CD8-positive, alpha-beta T cell (primary cell): ENCODE measurements at regions of chr6 and their contacts with region 1.

Region 1: GRCh38 chr6:116570856-116571682 is at the start of gene RWDD1:
- DNase-seq: peak; percentile 94 to 99 (median 98)
- ATAC-seq: peak; percentile 95
- H3K4me3 ChIP-seq: peak within 1 kb of the TSS; percentile 75 to 93
- H3K4me3 Mint-ChIP-seq: peak within 1 kb of the TSS; percentile 99
- H3K27ac ChIP-seq: peak within 1 kb of the TSS; percentile 92 to 99
- H3K27ac Mint-ChIP-seq: peak within 1 kb of the TSS; percentile 99
- H3K4me1 ChIP-seq: peaks cover 32% of the 10 kb centered on the region
- H3K4me1 Mint-ChIP-seq: peaks cover 52% of the 10 kb centered on the region
- H3K27me3 ChIP-seq: no peaks in the 10 kb centered on the region
- H3K27me3 Mint-ChIP-seq: no peaks in the 10 kb centered on the region
- CTCF ChIP-seq: no peak
- total RNA-seq, gene RWDD1: 65.1 to 68.7 TPM

Region 2: DNA sequence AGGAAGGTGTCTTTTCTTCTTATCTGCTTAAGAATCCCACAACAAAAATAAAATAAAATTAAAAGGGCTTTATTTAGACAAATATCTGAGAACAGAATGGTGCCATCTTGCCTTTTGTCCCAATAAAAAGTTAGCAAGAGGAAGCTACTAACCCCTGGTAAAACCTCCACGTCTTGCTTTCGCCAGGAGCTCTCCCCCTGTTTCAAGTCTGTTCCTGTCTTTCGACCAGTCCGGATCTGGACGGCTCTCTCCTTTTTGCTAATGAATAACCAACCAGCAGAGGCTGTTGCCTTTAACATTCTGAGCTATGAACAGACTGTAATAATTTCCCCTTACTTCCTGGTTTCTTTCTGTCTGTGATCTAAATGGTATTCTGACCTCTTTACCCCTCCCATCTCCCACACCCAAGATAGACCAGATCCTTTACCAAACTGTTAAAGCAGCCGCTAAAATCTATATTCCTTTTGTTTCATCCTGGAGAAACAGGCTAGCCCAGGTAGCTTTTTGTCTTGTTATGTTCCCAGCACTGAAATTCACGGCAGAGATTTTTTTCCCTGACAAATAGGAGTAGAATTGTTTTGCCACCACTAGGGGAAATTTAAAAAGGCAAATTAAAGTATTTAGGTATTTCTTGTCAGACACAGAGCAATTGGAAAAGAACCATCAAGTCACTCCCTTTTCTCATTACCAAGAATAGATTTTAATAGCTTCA is 510.3 kb before region 1 on chr6 and contains the start of gene FRK:
- CTCF ChIA-PET with region 1: no interaction called
- POLR2A ChIA-PET with region 1: no interaction called
- intact Hi-C with region 1: no loop called
- DNase-seq: no peak
- ATAC-seq: no peak
- H3K4me3 ChIP-seq: no peak within 1 kb of the TSS
- H3K4me3 Mint-ChIP-seq: no peak within 1 kb of the TSS
- H3K27ac ChIP-seq: no peak within 1 kb of the TSS
- H3K27ac Mint-ChIP-seq: no peak within 1 kb of the TSS
- H3K4me1 ChIP-seq: no peaks in the 10 kb centered on the region
- H3K4me1 Mint-ChIP-seq: no peaks in the 10 kb centered on the region
- H3K27me3 ChIP-seq: peaks cover 0 to 3% of the 10 kb centered on the region in 2 experiments
- H3K27me3 Mint-ChIP-seq: peaks cover 9% of the 10 kb centered on the region
- CTCF ChIP-seq: no peak
- total RNA-seq, gene FRK: 0.03 TPM in 1 of 2 experiments, not detected in the other

Region 3: DNA sequence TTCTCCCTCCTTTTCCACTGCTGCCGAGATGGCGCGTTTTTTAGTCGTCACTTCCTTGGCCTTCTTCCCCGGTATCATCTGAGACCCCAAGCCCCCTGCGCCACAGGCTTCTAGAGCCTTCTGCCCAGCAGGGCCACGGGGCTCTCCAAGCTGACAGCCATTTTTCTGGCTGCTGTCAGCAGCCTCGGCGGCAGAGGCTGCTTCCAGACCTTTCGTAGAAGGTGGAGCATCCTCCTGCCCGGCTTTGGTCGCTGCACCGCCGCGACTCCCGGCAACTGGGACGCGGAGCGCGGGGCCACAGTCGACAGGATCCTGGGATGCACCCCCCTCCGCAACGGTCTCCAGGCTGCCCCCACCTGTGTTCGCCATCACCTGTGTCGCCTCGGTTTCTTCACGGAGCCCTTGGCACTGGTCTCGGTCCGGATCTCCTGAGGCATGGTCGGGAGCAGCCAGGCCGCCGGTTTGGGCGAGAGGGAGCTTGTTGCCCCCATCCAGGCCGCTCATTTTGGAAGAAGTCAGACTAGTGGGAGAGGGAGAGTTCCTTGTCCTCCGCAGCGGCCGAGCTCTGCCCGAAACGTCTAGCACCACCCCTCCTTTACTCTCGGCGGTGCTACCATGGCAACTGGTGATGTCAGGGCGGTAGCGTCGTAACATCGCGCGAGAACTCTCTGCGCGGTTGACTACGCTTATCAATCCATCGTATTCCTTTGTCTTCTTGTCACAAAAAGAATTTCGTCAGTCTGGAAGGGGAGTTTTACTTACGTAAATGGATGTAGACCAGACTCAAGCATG is 317.4 kb before region 1 on chr6 and contains the start of gene TSPYL4:
- CTCF ChIA-PET with region 1: no interaction called
- POLR2A ChIA-PET with region 1: interaction called, 6 read pairs
- intact Hi-C with region 1: loop called in 1 of 2 experiments (anchors 1 kb)
- DNase-seq: peak; percentile 83 to 98 (median 91)
- ATAC-seq: peak; percentile 94
- H3K4me3 ChIP-seq: peak within 1 kb of the TSS; percentile 89 to 91
- H3K4me3 Mint-ChIP-seq: no peak within 1 kb of the TSS
- H3K27ac ChIP-seq: peak within 1 kb of the TSS; percentile 95 to 98
- H3K27ac Mint-ChIP-seq: no peak within 1 kb of the TSS
- H3K4me1 ChIP-seq: peaks cover 37% of the 10 kb centered on the region
- H3K4me1 Mint-ChIP-seq: peaks cover 26% of the 10 kb centered on the region
- H3K27me3 ChIP-seq: no peaks in the 10 kb centered on the region
- H3K27me3 Mint-ChIP-seq: no peaks in the 10 kb centered on the region
- CTCF ChIP-seq: no peak
- total RNA-seq, gene TSPYL4: 51.0 to 51.6 TPM

Region 4: DNA sequence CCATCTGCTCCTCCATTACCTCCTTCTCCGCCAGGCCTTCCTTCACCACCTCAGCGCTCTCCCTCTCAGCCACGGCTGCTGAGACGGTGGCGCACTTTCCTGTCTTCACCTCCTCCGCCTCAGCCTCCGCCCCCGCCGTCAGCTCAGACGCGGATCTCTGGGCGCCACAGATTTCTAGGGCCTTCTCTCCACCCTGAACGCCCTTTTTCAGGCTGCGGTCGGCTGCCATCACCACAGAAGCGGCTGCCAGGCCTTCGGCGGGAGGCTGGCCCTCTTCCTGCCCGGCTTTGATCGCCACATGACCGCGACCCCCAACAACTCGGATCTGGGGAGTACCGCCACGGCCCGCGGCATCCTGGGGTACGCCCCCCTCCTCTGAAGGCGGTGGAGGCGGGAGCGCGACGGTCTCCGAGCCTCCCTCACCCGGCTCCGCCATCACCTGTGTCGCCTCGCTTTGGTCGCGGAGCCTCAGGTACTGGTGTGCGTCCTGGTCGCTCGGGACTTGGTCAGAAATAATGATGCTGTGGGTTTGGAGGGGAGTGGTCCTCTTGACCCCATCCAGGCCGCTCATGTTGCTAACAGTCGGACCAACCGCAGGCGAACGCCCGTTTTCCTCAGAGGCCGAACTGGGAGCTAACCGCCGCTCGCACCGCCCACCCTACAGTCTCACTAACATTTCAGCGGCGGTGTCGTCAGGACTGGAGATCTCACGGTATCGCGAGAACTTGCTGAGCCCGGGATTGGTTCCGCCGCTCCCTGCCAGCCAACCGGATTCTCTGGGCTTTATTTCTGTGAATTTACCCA is 291.6 kb before region 1 on chr6 and contains the start of gene TSPYL1:
- CTCF ChIA-PET with region 1: interaction called, 3 read pairs
- POLR2A ChIA-PET with region 1: interaction called, 52 read pairs
- intact Hi-C with region 1: loop called (anchors 1 kb)
- DNase-seq: peak; percentile 88 to 99 (median 94)
- ATAC-seq: peak; percentile 82
- H3K4me3 ChIP-seq: peak within 1 kb of the TSS; percentile 79 to 98
- H3K4me3 Mint-ChIP-seq: peak within 1 kb of the TSS; percentile 97
- H3K27ac ChIP-seq: peak within 1 kb of the TSS; percentile 97 to 100
- H3K27ac Mint-ChIP-seq: peak within 1 kb of the TSS; percentile 99
- H3K4me1 ChIP-seq: peaks cover 55% of the 10 kb centered on the region
- H3K4me1 Mint-ChIP-seq: peaks cover 62% of the 10 kb centered on the region
- H3K27me3 ChIP-seq: no peaks in the 10 kb centered on the region
- H3K27me3 Mint-ChIP-seq: no peaks in the 10 kb centered on the region
- CTCF ChIP-seq: no peak
- total RNA-seq, gene TSPYL1: 247 to 248 TPM

Region 5: GRCh38 chr6:116328528-116328903 is 242.6 kb before region 1 on chr6:
- CTCF ChIA-PET with region 1: no interaction called
- POLR2A ChIA-PET with region 1: no interaction called
- intact Hi-C with region 1: no loop called
- DNase-seq: no peak
- ATAC-seq: no peak
- H3K4me3 ChIP-seq: no peak overlapping the region
- H3K4me3 Mint-ChIP-seq: no peak overlapping the region
- H3K27ac ChIP-seq: no peak overlapping the region
- H3K27ac Mint-ChIP-seq: no peak overlapping the region
- H3K4me1 ChIP-seq: no peaks in the 10 kb centered on the region
- H3K4me1 Mint-ChIP-seq: no peaks in the 10 kb centered on the region
- H3K27me3 ChIP-seq: no peaks in the 10 kb centered on the region
- H3K27me3 Mint-ChIP-seq: no peaks in the 10 kb centered on the region
- CTCF ChIP-seq: no peak

Region 6: GRCh38 chr6:116413357-116413756 is 157.7 kb before region 1 on chr6:
- CTCF ChIA-PET with region 1: no interaction called
- POLR2A ChIA-PET with region 1: interaction called, 11 read pairs
- intact Hi-C with region 1: no loop called
- DNase-seq: no peak
- ATAC-seq: no peak
- H3K4me3 ChIP-seq: no peak overlapping the region
- H3K4me3 Mint-ChIP-seq: no peak overlapping the region
- H3K27ac ChIP-seq: no peak overlapping the region
- H3K27ac Mint-ChIP-seq: no peak overlapping the region
- H3K4me1 ChIP-seq: no peaks in the 10 kb centered on the region
- H3K4me1 Mint-ChIP-seq: no peaks in the 10 kb centered on the region
- H3K27me3 ChIP-seq: no peaks in the 10 kb centered on the region
- H3K27me3 Mint-ChIP-seq: no peaks in the 10 kb centered on the region
- CTCF ChIP-seq: no peak

Region 7: GRCh38 chr6:116615937-116616736 is 45.1 kb after region 1 on chr6 and contains the start of gene RSPH4A:
- CTCF ChIA-PET with region 1: no interaction called
- POLR2A ChIA-PET with region 1: interaction called, 5 read pairs
- intact Hi-C with region 1: loop called in 1 of 2 experiments (anchors 2 kb)
- DNase-seq: peak; percentile 25 to 83 (median 61)
- ATAC-seq: peak; percentile 92
- H3K4me3 ChIP-seq: peak within 1 kb of the TSS; percentile 44 to 50
- H3K4me3 Mint-ChIP-seq: peak within 1 kb of the TSS; percentile 84
- H3K27ac ChIP-seq: peak within 1 kb of the TSS in 1 of 2 experiments; percentile 5
- H3K27ac Mint-ChIP-seq: no peak within 1 kb of the TSS
- H3K4me1 ChIP-seq: peaks cover 11% of the 10 kb centered on the region
- H3K4me1 Mint-ChIP-seq: peaks cover 21% of the 10 kb centered on the region
- H3K27me3 ChIP-seq: no peaks in the 10 kb centered on the region
- H3K27me3 Mint-ChIP-seq: peaks cover 3% of the 10 kb centered on the region
- CTCF ChIP-seq: no peak
- total RNA-seq, gene RSPH4A: 0.97 to 1.2 TPM

Region 8: DNA sequence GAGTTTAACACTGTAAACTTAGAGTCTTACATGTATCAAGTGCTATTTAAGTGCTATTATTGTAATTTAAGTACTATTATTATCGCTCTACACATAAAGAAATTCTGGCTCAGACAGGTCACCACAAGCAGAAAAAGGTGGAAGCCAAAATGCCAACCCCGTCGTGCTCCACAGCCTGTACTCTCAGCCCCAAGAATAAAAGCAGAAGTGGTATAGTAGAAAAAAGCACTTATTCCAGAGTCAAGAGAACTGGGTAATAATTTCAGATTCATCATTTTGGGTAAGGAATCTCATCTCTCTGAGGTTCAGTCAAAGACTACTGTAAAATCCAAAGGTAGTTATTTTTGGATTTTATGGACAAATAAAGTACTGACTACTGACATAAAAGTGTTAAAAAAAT is 96.6 kb after region 1 on chr6:
- CTCF ChIA-PET with region 1: no interaction called
- POLR2A ChIA-PET with region 1: interaction called, 5 read pairs
- intact Hi-C with region 1: loop called (anchors 1 to 2 kb)
- DNase-seq: no peak
- ATAC-seq: no peak
- H3K4me3 ChIP-seq: peak overlapping the region; percentile 71 to 83
- H3K4me3 Mint-ChIP-seq: peak overlapping the region; percentile 99
- H3K27ac ChIP-seq: peak overlapping the region; percentile 70 to 84
- H3K27ac Mint-ChIP-seq: no peak overlapping the region
- H3K4me1 ChIP-seq: peaks cover 33% of the 10 kb centered on the region
- H3K4me1 Mint-ChIP-seq: peaks cover 44% of the 10 kb centered on the region
- H3K27me3 ChIP-seq: no peaks in the 10 kb centered on the region
- H3K27me3 Mint-ChIP-seq: no peaks in the 10 kb centered on the region
- CTCF ChIP-seq: no peak

Region 9: DNA sequence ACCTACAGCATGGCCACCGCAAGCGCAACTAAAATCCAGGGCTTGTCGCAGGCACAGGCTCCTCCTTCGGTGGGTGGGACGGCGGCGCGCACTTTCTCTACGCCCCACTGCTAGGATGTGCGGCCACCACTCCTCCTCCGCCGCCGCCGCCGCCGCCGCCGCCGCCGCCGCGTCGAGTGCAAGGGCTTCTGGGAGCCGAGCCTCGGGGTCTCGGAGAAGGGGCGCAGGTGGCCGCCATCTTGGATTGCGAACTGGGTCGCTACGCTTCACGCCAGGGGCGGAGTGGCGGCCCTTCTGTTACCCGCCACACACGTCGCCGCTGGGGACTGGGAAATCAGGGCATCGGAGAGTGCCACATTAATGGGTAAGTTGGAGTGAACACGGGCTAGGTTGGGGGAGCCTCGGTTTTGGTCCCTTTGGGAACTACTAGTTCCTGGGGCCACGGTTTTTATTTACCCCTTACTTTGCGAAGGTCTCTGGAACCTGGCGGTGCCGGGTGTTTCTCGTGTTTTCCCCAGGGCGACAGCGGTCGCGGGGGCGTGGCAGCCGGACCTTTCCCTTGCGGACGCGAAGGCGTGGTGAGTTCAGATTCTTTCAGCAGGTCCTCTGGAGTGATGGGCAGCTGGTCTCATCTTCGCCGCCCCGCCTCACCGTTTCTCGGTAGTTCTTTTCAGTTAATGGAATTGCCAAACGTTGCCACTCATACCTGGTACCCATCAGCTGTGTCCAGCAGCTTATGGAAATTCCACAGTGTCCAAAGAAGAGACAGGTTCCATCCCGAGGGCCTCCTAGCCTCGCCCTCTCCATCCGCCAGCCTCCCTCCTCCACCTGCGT is 110.1 kb after region 1 on chr6 and contains the start of gene KPNA5:
- CTCF ChIA-PET with region 1: no interaction called
- POLR2A ChIA-PET with region 1: interaction called, 18 read pairs
- intact Hi-C with region 1: loop called (anchors 1 to 2 kb)
- DNase-seq: peak; percentile 85 to 96 (median 92)
- ATAC-seq: peak; percentile 93
- H3K4me3 ChIP-seq: peak within 1 kb of the TSS; percentile 95 to 97
- H3K4me3 Mint-ChIP-seq: peak within 1 kb of the TSS; percentile 96
- H3K27ac ChIP-seq: peak within 1 kb of the TSS; percentile 93 to 94
- H3K27ac Mint-ChIP-seq: peak within 1 kb of the TSS; percentile 99
- H3K4me1 ChIP-seq: peaks cover 17% of the 10 kb centered on the region
- H3K4me1 Mint-ChIP-seq: peaks cover 50% of the 10 kb centered on the region
- H3K27me3 ChIP-seq: no peaks in the 10 kb centered on the region
- H3K27me3 Mint-ChIP-seq: no peaks in the 10 kb centered on the region
- CTCF ChIP-seq: no peak
- total RNA-seq, gene KPNA5: 56.3 to 57.4 TPM